GM12878 (cell line): ENCODE measurements at regions of chr16 and their contacts with region 1.

Region 1: GRCh38 chr16:30052671-30053372 is 12.7 kb upstream of the ALDOA start:
- DNase-seq: peak; percentile 74
- ATAC-seq: peak; percentile 90
- H3K4me3 ChIP-seq: peak overlapping the region; percentile 83
- H3K27ac ChIP-seq: peak overlapping the region; percentile 55
- H3K4me1 ChIP-seq: peaks cover 3% of the 10 kb centered on the region; the same call in 1 of the 2 replicates
- H3K27me3 ChIP-seq: no peaks in the 10 kb centered on the region
- CTCF ChIP-seq: no peak
- EP300 ChIP-seq: peak in 1 of 2 experiments; percentile 49; a peak in 1 of 4 replicates
- POLR2A ChIP-seq: peak; percentile 70
- RAD21 ChIP-seq: no peak

Region 2: DNA sequence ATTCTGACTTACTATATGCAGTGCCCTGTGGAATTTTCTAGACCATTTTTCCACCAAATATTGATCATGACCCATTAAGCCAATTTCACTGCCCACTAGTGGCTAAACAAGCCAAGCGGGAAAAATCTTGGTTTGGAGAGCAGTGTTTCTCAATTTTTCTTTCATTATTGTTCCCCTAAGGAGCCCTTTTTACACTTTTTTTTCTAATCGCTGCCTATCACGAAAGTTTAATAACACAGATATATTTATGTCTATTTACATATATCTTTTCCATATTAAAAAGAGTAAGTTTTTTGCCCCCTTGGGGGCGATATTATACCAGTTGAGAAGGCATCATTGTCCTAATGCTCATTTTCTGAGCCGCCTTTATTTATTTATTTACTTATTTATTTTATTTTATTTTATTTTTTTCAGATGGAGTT is 11.0 kb before region 1 on chr16:
- CTCF ChIA-PET with region 1: interaction called, 24 read pairs
- POLR2A ChIA-PET with region 1: interaction called, 3 read pairs
- RAD21 ChIA-PET with region 1: no interaction called
- SMC1A ChIA-PET with region 1: interaction called, 6 read pairs
- in situ Hi-C with region 1: no loop called
- intact Hi-C with region 1: no loop called
- DNase-seq: no peak
- ATAC-seq: no peak
- H3K4me3 ChIP-seq: no peak overlapping the region
- H3K27ac ChIP-seq: no peak overlapping the region
- H3K4me1 ChIP-seq: no peaks in the 10 kb centered on the region
- H3K27me3 ChIP-seq: no peaks in the 10 kb centered on the region
- CTCF ChIP-seq: peak; percentile 6 to 29 (median 24); a peak in 3 of 6 replicates
- EP300 ChIP-seq: no peak
- POLR2A ChIP-seq: no peak
- RAD21 ChIP-seq: peak; percentile 47

Region 3: DNA sequence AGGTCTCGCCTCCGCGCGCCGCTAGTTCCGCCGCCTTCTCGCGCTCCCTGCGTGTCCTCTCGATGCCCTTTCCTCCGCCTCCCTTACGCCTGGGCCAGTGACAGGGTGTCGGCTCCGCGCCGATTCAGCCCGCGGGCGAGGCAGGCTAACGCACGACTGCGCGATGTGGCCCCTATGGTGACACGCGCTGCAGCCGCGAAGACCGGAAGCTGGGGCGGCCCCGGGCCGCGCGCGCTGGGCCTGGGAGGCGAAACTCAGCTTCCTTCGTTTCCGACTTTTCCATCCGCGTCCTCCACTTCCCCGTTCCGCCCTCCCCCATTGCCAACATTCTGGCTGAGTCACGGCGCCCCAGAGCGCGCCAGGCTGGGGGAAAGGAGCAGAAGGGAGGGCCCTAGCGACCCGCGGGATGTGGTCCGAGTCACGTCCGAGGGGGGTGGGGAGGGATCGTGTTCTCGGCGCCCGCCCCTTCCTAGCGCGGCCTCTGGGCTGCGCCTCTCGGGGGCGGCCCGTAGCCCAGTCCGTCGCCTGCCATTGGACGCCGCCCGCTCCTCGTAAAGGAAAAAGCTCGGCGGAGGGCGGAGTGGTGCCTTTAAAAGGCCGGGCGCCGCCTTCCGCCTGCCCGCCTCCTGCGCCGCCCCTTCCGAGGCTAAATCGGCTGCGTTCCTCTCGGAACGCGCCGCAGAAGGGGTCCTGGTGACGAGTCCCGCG is 12.5 kb after region 1 on chr16 and contains the start of gene ALDOA:
- CTCF ChIA-PET with region 1: interaction called, 51 read pairs
- POLR2A ChIA-PET with region 1: interaction called, 9 read pairs
- RAD21 ChIA-PET with region 1: interaction called, 8 read pairs
- SMC1A ChIA-PET with region 1: interaction called, 4 read pairs
- in situ Hi-C with region 1: no loop called
- intact Hi-C with region 1: no loop called
- DNase-seq: peak; percentile 86
- ATAC-seq: peak; percentile 89
- H3K4me3 ChIP-seq: peak within 1 kb of the TSS; percentile 94
- H3K27ac ChIP-seq: peak within 1 kb of the TSS; percentile 94
- H3K4me1 ChIP-seq: peaks cover 30% of the 10 kb centered on the region
- H3K27me3 ChIP-seq: no peaks in the 10 kb centered on the region
- CTCF ChIP-seq: no peak
- EP300 ChIP-seq: peak in 1 of 2 experiments; percentile 51; a peak in 2 of 4 replicates
- POLR2A ChIP-seq: peak; percentile 86
- RAD21 ChIP-seq: no peak
- polyA plus RNA-seq, gene ALDOA: 218 to 335 TPM